ENCODE measurements at regions of chr2 and their contacts with region 1.

Region 1: DNA sequence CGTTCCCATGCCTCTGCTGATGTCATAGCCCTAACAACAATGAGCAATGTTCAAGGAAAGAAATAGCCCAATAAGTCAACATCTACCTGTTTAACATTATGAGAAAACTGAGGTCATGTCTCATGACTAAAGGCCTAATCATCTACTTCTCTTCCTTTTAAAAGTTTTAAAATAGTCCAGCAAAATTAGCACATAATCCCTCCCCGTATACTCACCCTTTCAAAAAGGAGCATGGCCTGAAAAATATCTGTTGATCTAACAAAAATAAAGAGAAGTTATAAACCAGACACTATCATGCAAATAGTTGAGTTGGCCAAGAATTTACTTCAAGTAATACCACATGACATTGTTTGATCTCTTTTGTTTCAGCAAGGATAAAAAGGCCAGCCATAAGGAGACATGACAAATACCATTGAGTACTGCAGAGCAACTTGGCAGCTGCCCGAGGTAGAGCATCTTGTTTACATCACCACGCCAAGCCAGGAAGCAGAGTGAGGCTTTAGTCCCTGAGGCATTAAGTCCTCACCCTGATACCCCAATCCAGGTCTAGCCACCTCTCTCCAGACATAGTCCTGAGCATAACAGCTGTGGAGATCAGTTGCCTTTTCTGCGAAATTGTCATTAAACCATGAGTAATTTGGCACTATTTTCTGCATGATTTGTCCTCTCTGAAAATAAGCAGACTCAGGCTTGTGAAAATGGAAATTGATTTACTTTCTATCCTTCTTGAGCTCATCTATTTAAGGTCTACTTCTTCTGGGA is 137.4 kb upstream of the ETAA1 start:
- DNase-seq: peak; percentile 22
- H3K4me3 ChIP-seq: no peak overlapping the region
- H3K27ac ChIP-seq: peak overlapping the region; percentile 70 to 84 (median 79)
- H3K4me1 ChIP-seq: no peaks in the 10 kb centered on the region
- H3K27me3 ChIP-seq: no peaks in the 10 kb centered on the region
- CTCF ChIP-seq: no peak
- EP300 ChIP-seq: peak; percentile 1
- POLR2A ChIP-seq: no peak

Region 2: GRCh38 chr2:67660871-67661270 is 401.1 kb after region 1 on chr2:
- in situ Hi-C with region 1: no loop called
- intact Hi-C with region 1: loop called (anchors 5 kb)
- DNase-seq: no peak
- H3K4me3 ChIP-seq: no peak overlapping the region
- H3K27ac ChIP-seq: peak overlapping the region in 1 of 4 donors; percentile 28
- H3K4me1 ChIP-seq: no peaks in the 10 kb centered on the region
- H3K27me3 ChIP-seq: no peaks in the 10 kb centered on the region
- CTCF ChIP-seq: no peak
- EP300 ChIP-seq: no peak
- POLR2A ChIP-seq: no peak

Measured in transverse colon (tissue), 4 donors.